Activated CD8-positive, alpha-beta T cell treated with anti-CD3 and anti-CD28 coated beads, Interleukin-2, amount 10 ng/mL, durations not matched to agents 7 days and 5 days (primary cell): ENCODE measurements at regions of chr6 and their contacts with region 1.

Region 1: DNA sequence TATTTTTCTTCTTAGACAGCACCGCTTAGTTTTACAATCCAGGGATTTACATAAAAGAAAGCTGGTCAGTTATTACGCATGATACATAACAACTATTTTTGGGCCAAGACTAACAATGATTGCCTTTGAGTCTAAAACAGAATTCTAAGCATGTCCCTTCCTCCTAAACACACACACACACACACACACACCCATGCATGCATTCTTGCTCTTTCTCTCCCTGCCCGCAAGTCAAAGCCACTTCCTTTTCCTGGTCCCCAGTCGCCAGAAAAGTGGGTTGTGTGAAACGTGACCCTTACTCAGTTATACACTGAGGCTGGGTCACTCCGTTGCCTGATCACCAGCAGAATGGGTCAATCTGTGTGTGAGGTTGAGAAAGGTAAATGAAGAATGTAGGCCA is 31.4 kb downstream of the FYN start:
- DNase-seq: peak; percentile 77
- ATAC-seq: peak; percentile 2
- H3K4me3 Mint-ChIP-seq: no peak overlapping the region
- H3K27ac Mint-ChIP-seq: no peak overlapping the region
- H3K4me1 Mint-ChIP-seq: no peaks in the 10 kb centered on the region
- H3K27me3 Mint-ChIP-seq: no peaks in the 10 kb centered on the region

Region 2: GRCh38 chr6:111692327-111693164 is 149.3 kb before region 1 on chr6:
- CTCF ChIA-PET with region 1: no interaction called
- POLR2A ChIA-PET with region 1: no interaction called
- DNase-seq: no peak
- ATAC-seq: no peak
- H3K4me3 Mint-ChIP-seq: no peak overlapping the region
- H3K27ac Mint-ChIP-seq: peak overlapping the region; percentile 53
- H3K4me1 Mint-ChIP-seq: peaks cover 21% of the 10 kb centered on the region
- H3K27me3 Mint-ChIP-seq: no peaks in the 10 kb centered on the region

Region 3: GRCh38 chr6:111804627-111805235 is 37.1 kb before region 1 on chr6:
- CTCF ChIA-PET with region 1: interaction called, 17 read pairs
- POLR2A ChIA-PET with region 1: interaction called, 6 read pairs
- DNase-seq: peak; percentile 89
- ATAC-seq: peak; percentile 78
- H3K4me3 Mint-ChIP-seq: peak overlapping the region; percentile 56
- H3K27ac Mint-ChIP-seq: peak overlapping the region; percentile 99
- H3K4me1 Mint-ChIP-seq: peaks cover 90% of the 10 kb centered on the region
- H3K27me3 Mint-ChIP-seq: no peaks in the 10 kb centered on the region

Region 4: GRCh38 chr6:111823831-111824607 is 17.8 kb before region 1 on chr6:
- CTCF ChIA-PET with region 1: interaction called, 46 read pairs
- POLR2A ChIA-PET with region 1: interaction called, 9 read pairs
- DNase-seq: no peak
- ATAC-seq: peak; percentile 72
- H3K4me3 Mint-ChIP-seq: peak overlapping the region; percentile 53
- H3K27ac Mint-ChIP-seq: peak overlapping the region; percentile 73
- H3K4me1 Mint-ChIP-seq: peaks cover 67% of the 10 kb centered on the region
- H3K27me3 Mint-ChIP-seq: no peaks in the 10 kb centered on the region

Region 5: GRCh38 chr6:111861431-111861885 is 19.6 kb after region 1 on chr6:
- CTCF ChIA-PET with region 1: interaction called, 13 read pairs
- POLR2A ChIA-PET with region 1: interaction called, 3 read pairs
- DNase-seq: peak; percentile 19
- ATAC-seq: no peak
- H3K4me3 Mint-ChIP-seq: no peak overlapping the region
- H3K27ac Mint-ChIP-seq: no peak overlapping the region
- H3K4me1 Mint-ChIP-seq: peaks cover 94% of the 10 kb centered on the region
- H3K27me3 Mint-ChIP-seq: no peaks in the 10 kb centered on the region

Region 6: DNA sequence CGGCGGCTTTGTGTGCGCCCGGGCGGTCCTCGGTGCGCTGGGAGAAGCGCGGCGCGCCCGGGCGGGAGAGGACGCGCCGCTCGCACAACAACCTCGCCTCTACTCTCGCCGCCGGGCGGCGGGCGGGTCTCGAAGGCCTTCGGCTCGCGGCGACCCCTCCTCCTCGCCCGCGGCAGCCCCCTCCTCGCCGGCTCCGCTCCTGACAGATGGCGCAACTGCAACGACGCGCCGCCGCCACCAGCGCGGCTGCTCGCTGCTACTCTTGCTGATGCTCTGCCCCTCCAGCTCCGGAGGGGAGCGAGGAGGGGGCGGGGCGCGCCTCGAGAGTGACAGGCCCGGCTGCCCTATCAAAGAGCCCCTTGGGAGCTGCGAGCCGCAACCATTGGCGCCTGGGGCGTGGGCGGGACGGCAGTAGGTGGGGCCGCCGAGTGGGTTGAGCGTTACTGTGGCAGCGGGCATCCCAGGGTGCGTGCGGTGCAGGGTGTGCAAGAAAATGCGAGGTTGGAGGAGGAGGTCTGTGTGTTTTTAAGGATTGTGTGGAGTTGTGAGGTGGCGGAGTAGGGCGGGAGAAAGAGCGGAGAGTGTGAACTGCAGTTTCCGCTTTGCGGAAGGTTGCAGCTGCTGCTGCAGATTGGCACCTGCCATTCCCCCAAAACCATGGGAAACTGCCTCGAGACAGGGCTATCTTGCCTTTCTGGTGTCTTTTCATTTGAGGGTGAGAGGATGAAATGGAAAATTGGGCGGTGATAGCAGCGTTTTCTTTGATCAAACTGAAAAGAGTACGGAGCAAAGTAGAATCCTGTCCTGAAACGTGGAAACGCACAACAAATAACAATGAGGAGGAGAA is 31.6 kb after region 1 on chr6 and contains the start of gene FYN:
- CTCF ChIA-PET with region 1: interaction called, 17 read pairs
- POLR2A ChIA-PET with region 1: interaction called, 8 read pairs
- DNase-seq: peak; percentile 99
- ATAC-seq: peak; percentile 86
- H3K4me3 Mint-ChIP-seq: peak within 1 kb of the TSS; percentile 94
- H3K27ac Mint-ChIP-seq: peak within 1 kb of the TSS; percentile 95
- H3K4me1 Mint-ChIP-seq: peaks cover 37% of the 10 kb centered on the region
- H3K27me3 Mint-ChIP-seq: no peaks in the 10 kb centered on the region
- total RNA-seq, gene FYN: 148 to 154 TPM

Region 7: DNA sequence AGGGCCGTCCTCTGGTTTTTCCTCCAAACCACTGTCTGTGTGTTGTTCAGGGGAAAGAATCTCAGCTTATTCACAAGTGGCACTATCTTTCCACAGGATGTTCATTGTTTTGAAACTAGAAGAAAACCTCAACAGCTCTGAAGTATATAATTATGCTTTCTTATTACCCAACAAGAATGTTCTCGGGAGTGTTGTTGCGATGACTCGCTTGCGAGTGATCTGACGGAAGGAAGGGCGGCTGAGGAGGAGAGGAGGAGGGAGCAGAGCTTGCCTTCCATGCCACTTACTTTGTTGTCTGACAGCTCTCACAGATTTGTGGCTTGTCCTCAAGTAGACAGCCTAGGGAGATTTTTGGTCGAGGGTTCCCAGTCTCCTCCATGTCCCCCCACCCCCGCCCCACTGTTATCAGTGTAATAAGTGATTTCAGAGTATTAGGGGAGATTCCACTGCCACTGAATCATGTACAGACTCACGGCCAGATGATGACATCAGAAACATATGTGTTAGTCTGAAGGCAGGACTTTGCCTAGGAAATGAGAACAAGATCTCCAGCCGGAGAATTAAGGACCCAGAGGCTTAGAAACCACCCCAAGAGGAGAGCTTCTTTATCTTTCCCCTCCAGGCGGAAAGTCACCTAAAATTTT is 131.4 kb after region 1 on chr6:
- CTCF ChIA-PET with region 1: no interaction called
- POLR2A ChIA-PET with region 1: no interaction called
- DNase-seq: peak; percentile 51
- ATAC-seq: peak; percentile 77
- H3K4me3 Mint-ChIP-seq: no peak overlapping the region
- H3K27ac Mint-ChIP-seq: peak overlapping the region; percentile 5
- H3K4me1 Mint-ChIP-seq: peaks cover 45% of the 10 kb centered on the region
- H3K27me3 Mint-ChIP-seq: no peaks in the 10 kb centered on the region